A673 (cell line): ENCODE measurements at regions of chr14 and their contacts with region 1.

Region 1: GRCh38 chr14:87615822-87616679 is 376.9 kb downstream of the GALC start:
- DNase-seq: peak; percentile 75
- H3K4me3 ChIP-seq: no peak overlapping the region
- H3K27ac ChIP-seq: no peak overlapping the region
- H3K4me1 ChIP-seq: peaks cover 6% of the 10 kb centered on the region
- H3K27me3 ChIP-seq: no peaks in the 10 kb centered on the region
- CTCF ChIP-seq: peak; percentile 84

Region 2: DNA sequence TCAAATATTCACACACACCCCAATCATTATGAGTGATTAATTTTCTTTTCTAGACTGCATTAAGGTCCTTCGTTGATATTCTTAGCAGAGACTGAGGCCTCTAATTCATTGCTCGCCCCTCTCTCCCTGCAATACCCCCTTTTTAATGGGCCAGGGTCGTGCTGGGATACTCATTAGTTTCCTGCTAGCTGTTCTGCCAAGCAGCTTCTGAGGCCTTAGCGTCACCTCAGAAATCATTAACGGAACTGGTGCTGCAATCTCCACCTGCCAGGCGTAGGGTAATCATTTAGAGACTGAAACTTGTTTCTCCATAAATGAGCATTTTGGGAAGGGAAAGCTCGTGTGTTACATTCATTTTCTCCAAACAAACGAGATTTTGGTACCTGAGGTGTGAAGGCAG is 677.7 kb before region 1 on chr14:
- CTCF ChIA-PET with region 1: no interaction called
- POLR2A ChIA-PET with region 1: no interaction called
- intact Hi-C with region 1: no loop called
- DNase-seq: no peak
- H3K4me3 ChIP-seq: no peak overlapping the region
- H3K27ac ChIP-seq: no peak overlapping the region
- H3K4me1 ChIP-seq: peaks cover 33% of the 10 kb centered on the region
- H3K27me3 ChIP-seq: no peaks in the 10 kb centered on the region
- CTCF ChIP-seq: no peak

Region 3: GRCh38 chr14:87002776-87003175 is 613.3 kb before region 1 on chr14:
- CTCF ChIA-PET with region 1: no interaction called
- POLR2A ChIA-PET with region 1: no interaction called
- intact Hi-C with region 1: loop called (anchors 10 kb)
- DNase-seq: peak; percentile 50
- H3K4me3 ChIP-seq: no peak overlapping the region
- H3K27ac ChIP-seq: no peak overlapping the region
- H3K4me1 ChIP-seq: peaks cover 43% of the 10 kb centered on the region
- H3K27me3 ChIP-seq: no peaks in the 10 kb centered on the region
- CTCF ChIP-seq: peak; percentile 54

Region 4: DNA sequence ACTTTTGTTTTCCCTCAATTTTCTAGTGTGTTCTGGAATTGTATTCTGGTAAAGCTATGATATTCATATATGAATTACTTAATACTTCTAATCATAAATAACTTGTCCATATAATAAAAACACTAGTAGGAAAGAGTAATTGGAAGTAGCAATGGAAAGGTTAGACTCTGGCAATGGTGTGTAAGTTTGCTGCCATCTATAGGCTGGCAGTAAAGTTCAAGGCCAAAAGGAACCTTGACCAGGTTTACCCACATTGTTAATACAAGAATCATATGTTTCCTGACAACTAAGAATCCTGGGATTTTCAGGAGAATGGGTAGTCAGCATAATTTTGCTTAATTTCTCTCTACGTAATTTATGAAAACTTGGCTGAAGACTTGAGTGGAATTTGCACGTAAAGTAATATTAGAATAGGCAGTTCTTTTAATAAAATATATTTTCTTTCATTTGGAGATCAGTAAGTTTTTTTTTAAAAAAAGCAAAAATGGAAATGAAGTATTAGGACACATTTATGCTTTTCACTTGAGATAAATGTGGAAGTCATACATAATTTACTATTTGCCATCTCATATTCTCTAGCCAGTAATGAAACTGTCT is 549.7 kb before region 1 on chr14:
- CTCF ChIA-PET with region 1: no interaction called
- POLR2A ChIA-PET with region 1: no interaction called
- intact Hi-C with region 1: loop called (anchors 5 kb)
- DNase-seq: peak; percentile 22
- H3K4me3 ChIP-seq: no peak overlapping the region
- H3K27ac ChIP-seq: no peak overlapping the region
- H3K4me1 ChIP-seq: no peaks in the 10 kb centered on the region
- H3K27me3 ChIP-seq: no peaks in the 10 kb centered on the region
- CTCF ChIP-seq: peak; percentile 67

Region 5: DNA sequence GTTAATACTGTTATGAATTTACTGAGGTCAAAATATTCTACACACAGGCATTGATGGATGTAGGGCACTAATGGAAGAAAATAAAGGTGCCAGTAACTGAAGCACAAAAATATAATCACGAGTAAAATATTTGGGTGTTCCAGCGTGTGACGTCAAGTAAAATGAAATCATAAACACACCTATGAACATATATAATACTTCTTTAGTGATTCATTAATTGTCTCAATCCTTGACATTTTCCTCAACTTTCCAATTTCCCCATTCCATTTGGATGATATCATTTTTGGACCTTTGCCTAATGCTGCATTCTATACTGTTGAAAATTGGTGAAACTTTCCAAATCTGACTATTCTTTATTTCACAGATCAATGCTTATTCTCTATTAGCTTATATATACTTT is 272.4 kb before region 1 on chr14:
- CTCF ChIA-PET with region 1: no interaction called
- POLR2A ChIA-PET with region 1: no interaction called
- intact Hi-C with region 1: loop called (anchors 10 kb)
- DNase-seq: no peak
- H3K4me3 ChIP-seq: no peak overlapping the region
- H3K27ac ChIP-seq: no peak overlapping the region
- H3K4me1 ChIP-seq: peaks cover 3% of the 10 kb centered on the region
- H3K27me3 ChIP-seq: no peaks in the 10 kb centered on the region
- CTCF ChIP-seq: no peak

Region 6: DNA sequence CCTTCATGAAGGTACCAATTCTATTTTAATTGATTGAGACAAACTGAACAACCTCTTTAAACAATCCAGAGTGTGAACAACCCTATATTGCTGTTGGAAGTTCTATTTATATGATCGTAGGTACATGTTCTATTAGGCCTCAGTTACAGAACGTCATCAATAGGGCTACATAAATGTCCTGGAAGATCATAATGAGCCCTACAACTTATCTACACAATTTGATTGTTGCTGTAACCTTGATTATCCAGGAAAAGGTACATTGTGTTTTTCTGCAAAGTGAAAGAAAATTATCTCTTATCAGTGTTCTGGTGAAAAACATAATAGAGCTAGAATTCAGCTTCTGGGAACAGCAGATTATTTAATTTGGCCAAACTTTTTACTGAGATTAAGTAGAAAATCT is 236.0 kb before region 1 on chr14:
- CTCF ChIA-PET with region 1: no interaction called
- POLR2A ChIA-PET with region 1: no interaction called
- intact Hi-C with region 1: no loop called
- DNase-seq: no peak
- H3K4me3 ChIP-seq: no peak overlapping the region
- H3K27ac ChIP-seq: no peak overlapping the region
- H3K4me1 ChIP-seq: no peaks in the 10 kb centered on the region
- H3K27me3 ChIP-seq: no peaks in the 10 kb centered on the region
- CTCF ChIP-seq: no peak

Region 7: GRCh38 chr14:87896393-87897380 is 280.6 kb after region 1 on chr14:
- CTCF ChIA-PET with region 1: no interaction called
- POLR2A ChIA-PET with region 1: no interaction called
- intact Hi-C with region 1: loop called (anchors 10 kb)
- DNase-seq: peak; percentile 65
- H3K4me3 ChIP-seq: no peak overlapping the region
- H3K27ac ChIP-seq: no peak overlapping the region
- H3K4me1 ChIP-seq: no peaks in the 10 kb centered on the region
- H3K27me3 ChIP-seq: no peaks in the 10 kb centered on the region
- CTCF ChIP-seq: peak; percentile 81